ENCODE measurements at regions of chr4 and their contacts with region 1.

Region 1: DNA sequence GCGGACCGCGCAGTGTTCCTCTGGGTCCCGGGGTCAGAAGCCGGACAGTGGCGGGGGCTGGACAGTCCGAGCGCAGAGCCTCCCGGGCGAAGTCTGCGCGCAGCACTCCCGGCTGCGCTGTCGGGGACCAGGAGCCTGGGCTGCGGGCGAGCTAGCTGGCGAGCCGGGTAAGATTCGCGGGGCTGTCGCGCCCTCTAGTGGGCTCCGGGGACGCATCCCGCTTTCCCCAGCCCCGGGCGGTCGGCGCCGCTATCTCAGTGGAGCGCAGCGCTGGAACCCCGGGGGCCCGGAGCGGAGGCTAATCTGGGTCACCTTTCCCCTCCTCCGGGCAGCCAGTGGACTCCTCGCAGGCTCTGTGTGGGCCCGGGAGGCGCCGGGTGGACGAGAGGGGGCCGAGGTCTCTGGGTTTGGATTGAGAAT is 4.2 kb downstream of the PDGFRA start:
- DNase-seq: peak; percentile 91 to 97
- ATAC-seq: peak; percentile 91
- H3K4me3 ChIP-seq: peak overlapping the region; percentile 34 to 71
- H3K27ac ChIP-seq: peak overlapping the region in 1 of 2 donors; percentile 85
- H3K4me1 ChIP-seq: no peaks in the 10 kb centered on the region
- H3K27me3 ChIP-seq: no peaks in the 10 kb centered on the region

Region 2: GRCh38 chr4:52376132-52376704 is 1857.1 kb before region 1 on chr4:
- intact Hi-C with region 1: loop called in 1 of 2 experiments (anchors 10 kb)
- DNase-seq: no peak
- ATAC-seq: no peak
- H3K4me3 ChIP-seq: no peak overlapping the region
- H3K27ac ChIP-seq: no peak overlapping the region
- H3K4me1 ChIP-seq: no peaks in the 10 kb centered on the region
- H3K27me3 ChIP-seq: no peaks in the 10 kb centered on the region

Region 3: GRCh38 chr4:52861879-52862616 is 1371.2 kb before region 1 on chr4 and contains the start of gene RASL11B:
- intact Hi-C with region 1: loop called in 1 of 2 experiments (anchors 10 kb)
- DNase-seq: peak; percentile 89 to 94
- ATAC-seq: peak; percentile 97
- H3K4me3 ChIP-seq: peak within 1 kb of the TSS; percentile 71 to 75
- H3K27ac ChIP-seq: peak within 1 kb of the TSS; percentile 11 to 78
- H3K4me1 ChIP-seq: peaks cover 0 to 2% of the 10 kb centered on the region in 2 donors
- H3K27me3 ChIP-seq: no peaks in the 10 kb centered on the region
- total RNA-seq, gene RASL11B: 5.6 to 5.7 TPM

Region 4: DNA sequence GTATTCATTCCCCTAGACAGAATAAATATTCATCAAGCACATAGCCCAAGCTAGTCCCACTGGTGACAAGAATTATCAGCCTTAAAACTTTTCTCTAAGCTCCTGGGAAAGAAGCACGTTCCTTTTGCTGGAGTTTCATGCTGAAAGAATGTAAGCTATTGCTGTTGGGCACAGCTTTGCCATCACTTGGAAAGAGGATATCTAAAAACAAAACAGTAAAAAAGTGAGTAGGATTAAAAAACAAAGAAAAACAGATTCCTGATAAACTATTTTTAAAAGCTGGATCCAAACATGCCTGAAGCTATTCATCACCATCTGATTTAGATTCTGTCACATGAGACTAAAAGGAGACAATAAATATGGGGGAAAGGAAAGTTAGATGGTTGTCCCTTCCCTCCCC is 1044.3 kb before region 1 on chr4:
- intact Hi-C with region 1: loop called in 1 of 2 experiments (anchors 5 kb)
- DNase-seq: no peak
- ATAC-seq: peak; percentile 28
- H3K4me3 ChIP-seq: no peak overlapping the region
- H3K27ac ChIP-seq: peak overlapping the region; percentile 82 to 88
- H3K4me1 ChIP-seq: peaks cover 0 to 7% of the 10 kb centered on the region in 2 donors
- H3K27me3 ChIP-seq: no peaks in the 10 kb centered on the region

Region 5: DNA sequence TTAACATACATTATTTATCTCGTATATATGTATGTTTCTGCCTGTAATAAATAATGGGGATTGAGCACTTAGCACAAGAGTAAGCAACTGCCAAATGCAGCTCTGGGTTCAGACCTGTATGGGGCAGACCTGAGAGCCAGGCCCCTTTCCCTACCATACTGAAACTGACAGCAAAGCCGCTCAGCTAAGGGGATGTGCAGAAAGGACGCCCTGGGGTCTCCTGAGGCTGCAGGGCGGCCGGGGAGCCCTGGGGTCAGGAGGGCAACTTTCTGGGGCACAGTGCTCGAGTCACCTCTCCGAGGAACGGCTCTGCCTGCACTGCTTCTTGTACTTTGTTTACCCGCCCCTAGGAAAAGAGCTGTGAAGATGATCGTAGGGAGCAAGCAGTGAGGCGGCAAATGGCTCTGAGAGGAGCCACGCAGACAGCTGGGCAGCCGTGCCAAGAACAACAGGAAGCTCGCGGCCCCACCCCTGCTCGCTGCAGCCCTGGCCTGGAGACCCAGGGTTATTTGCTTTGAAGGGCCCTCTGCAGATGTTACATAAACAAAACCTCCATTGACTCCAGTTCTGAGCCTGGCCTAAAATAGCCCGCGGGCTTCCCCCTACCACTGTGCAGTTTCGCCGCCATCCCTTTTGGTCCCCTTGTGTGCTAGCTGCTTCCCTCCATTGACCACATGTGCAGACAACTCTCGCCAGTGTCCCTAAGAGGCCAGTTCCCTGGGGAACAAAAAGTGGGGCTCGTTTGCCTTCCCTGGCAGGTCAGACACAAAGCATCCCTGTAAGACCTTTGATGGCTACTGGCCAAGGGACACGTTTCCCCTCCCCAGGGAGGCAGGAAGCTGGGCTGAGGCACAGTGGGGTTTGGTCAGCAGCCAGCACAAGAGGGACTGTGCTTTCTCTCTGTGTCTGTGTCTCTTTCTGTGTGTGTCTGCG is 530.7 kb before region 1 on chr4:
- intact Hi-C with region 1: loop called in 1 of 2 experiments (anchors 5 kb)
- DNase-seq: peak; percentile 88 to 90
- ATAC-seq: peak; percentile 92
- H3K4me3 ChIP-seq: no peak overlapping the region
- H3K27ac ChIP-seq: peak overlapping the region in 1 of 2 donors; percentile 22
- H3K4me1 ChIP-seq: no peaks in the 10 kb centered on the region
- H3K27me3 ChIP-seq: no peaks in the 10 kb centered on the region